Caco-2 (cell line): ENCODE measurements at regions of chr3 and their contacts with region 1.

Region 1: GRCh38 chr3:101495552-101495951 is 17.5 kb downstream of the SENP7 start:
- DNase-seq: peak in 1 of 2 experiments; percentile 27
- H3K4me3 ChIP-seq: no peak overlapping the region
- H3K4me3 Mint-ChIP-seq: no peak overlapping the region
- H3K27ac Mint-ChIP-seq: no peak overlapping the region
- H3K4me1 ChIP-seq: no peaks in the 10 kb centered on the region
- H3K4me1 Mint-ChIP-seq: no peaks in the 10 kb centered on the region
- H3K27me3 ChIP-seq: no peaks in the 10 kb centered on the region
- H3K27me3 Mint-ChIP-seq: no peaks in the 10 kb centered on the region
- CTCF ChIP-seq: peak; percentile 12 to 39

Region 2: GRCh38 chr3:101509811-101510210 is 14.3 kb after region 1 on chr3:
- CTCF ChIA-PET with region 1: no interaction called
- POLR2A ChIA-PET with region 1: no interaction called
- intact Hi-C with region 1: no loop called
- DNase-seq: no peak
- H3K4me3 ChIP-seq: no peak overlapping the region
- H3K4me3 Mint-ChIP-seq: no peak overlapping the region
- H3K27ac Mint-ChIP-seq: no peak overlapping the region
- H3K4me1 ChIP-seq: peaks cover 11% of the 10 kb centered on the region
- H3K4me1 Mint-ChIP-seq: peaks cover 6% of the 10 kb centered on the region
- H3K27me3 ChIP-seq: no peaks in the 10 kb centered on the region
- H3K27me3 Mint-ChIP-seq: no peaks in the 10 kb centered on the region
- CTCF ChIP-seq: no peak

Region 3: DNA sequence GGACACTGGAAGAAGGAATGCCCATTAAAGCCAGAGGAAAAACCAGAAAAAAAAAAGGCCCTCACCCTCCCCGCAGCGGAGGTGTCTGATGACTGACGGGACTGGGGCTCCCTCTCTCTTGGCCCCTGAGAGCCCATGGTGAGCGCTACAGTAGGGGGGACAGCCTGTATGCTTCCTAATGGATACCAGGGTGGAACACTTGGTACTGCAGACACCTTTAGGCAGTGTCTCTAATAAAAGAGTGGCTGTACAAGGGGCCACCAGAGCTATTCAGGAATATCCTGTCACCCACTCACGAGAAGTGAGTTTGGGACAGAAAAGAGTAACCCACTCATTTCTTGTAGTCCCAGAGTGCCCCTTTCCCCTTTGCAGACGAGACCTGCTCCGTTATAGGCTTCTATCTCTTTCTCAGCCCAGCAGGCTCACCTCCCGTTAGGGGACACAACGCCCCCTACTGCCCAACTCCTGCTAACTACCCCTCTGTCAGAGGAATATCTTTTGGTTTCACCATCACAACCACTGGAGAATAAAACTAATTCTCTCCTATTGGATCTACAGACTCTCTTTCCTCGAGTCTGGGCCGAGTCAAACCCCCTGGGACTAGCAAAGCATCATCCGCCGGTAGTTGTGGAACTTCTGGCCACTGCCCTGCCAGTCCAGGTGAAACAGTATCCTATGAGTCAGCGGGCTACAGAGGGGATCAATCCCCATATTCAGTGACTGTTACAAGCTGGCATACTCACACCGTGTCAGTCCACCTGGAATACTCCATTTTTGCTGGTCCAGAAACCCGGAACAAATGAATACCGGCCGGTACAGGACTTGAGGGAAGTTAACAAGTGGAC is 140.6 kb after region 1 on chr3:
- CTCF ChIA-PET with region 1: no interaction called
- POLR2A ChIA-PET with region 1: no interaction called
- intact Hi-C with region 1: loop called (anchors 1 kb)
- DNase-seq: peak; percentile 54 to 72
- H3K4me3 ChIP-seq: no peak overlapping the region
- H3K4me3 Mint-ChIP-seq: no peak overlapping the region
- H3K27ac Mint-ChIP-seq: no peak overlapping the region
- H3K4me1 ChIP-seq: peaks cover under 1% of the 10 kb centered on the region; the same call in 1 of the 2 replicates
- H3K4me1 Mint-ChIP-seq: peaks cover 11% of the 10 kb centered on the region
- H3K27me3 ChIP-seq: no peaks in the 10 kb centered on the region
- H3K27me3 Mint-ChIP-seq: peaks cover 7% of the 10 kb centered on the region
- CTCF ChIP-seq: peak; percentile 51 to 55